ENCODE measurements at regions of chr6 and their contacts with region 1.

Region 1: DNA sequence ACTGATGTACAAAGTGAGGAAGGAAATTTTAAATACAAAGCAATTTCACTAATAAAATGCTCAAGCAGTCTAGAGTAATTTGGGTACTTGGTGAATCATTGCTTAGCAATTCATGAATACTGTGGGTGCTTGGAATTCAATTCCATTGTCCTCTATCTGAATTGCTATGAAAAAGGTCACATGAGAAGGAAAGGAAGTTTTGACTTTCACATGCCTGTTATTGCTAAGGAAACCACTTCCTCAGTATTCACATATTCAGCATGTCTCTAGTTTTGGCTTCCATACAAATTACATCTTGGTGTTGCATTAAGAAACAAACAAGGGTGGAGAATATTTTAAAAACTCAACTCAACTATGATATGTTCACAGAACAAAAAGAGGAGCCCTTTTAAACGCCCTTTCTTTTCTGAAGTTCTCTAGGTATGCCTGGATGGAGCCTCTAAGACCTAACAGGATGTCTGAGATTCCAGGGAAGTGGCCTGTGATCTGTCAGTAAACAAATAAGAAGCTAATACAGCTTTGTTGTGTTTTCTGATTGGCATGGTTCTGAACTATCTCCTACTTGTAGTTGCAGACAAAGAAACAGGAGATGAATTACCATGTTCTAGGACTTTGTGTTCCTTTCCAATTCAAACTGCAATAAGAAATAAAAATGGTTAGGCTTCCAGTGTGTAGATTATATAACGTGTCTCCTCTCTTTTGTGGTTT is 190.4 kb downstream of the OGFRL1 start:
- DNase-seq: no peak
- ATAC-seq: peak; percentile 48 to 86 (median 78)
- H3K4me3 ChIP-seq: no peak overlapping the region
- H3K27ac ChIP-seq: peak overlapping the region in 9 of 10 donors; percentile 10 to 81 (median 70)
- H3K4me1 ChIP-seq: peaks cover 0 to 62% (median 45%) of the 10 kb centered on the region in 9 donors
- H3K27me3 ChIP-seq: no peaks in the 10 kb centered on the region
- CTCF ChIP-seq: no peak

Region 2: DNA sequence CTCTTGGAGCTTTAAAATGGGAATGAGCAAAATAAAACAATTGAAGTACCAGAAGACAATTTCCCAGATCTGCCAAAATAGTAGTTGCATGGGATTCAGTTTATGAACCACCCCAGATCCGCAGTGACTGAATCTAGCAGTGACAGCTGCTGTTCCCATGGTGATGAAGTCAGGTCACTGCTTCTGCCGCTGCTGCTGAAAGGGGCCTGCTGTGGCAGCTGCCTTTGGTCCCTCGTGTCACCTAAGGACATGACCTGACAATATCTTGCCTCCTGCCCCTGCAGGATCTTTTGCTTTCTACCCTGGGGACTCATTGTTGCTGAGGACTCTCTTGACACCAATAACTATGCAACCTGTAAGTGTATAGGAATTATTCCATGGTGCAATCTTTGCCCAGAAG is 224.7 kb before region 1 on chr6:
- intact Hi-C with region 1: no loop called
- DNase-seq: peak in 1 of 2 donors; percentile 40
- ATAC-seq: peak in 7 of 8 donors; percentile 22 to 67 (median 54)
- H3K4me3 ChIP-seq: no peak overlapping the region
- H3K27ac ChIP-seq: peak overlapping the region in 4 of 10 donors; percentile 10 to 39 (median 28)
- H3K4me1 ChIP-seq: peaks cover 0 to 56% (median 37%) of the 10 kb centered on the region in 9 donors
- H3K27me3 ChIP-seq: no peaks in the 10 kb centered on the region
- CTCF ChIP-seq: no peak

Region 3: GRCh38 chr6:71324194-71324785 is 154.7 kb before region 1 on chr6:
- intact Hi-C with region 1: no loop called
- DNase-seq: peak in 1 of 2 donors; percentile 10
- ATAC-seq: peak in 6 of 8 donors; percentile 35 to 75 (median 45)
- H3K4me3 ChIP-seq: no peak overlapping the region
- H3K27ac ChIP-seq: peak overlapping the region in 4 of 10 donors; percentile 3 to 49 (median 14)
- H3K4me1 ChIP-seq: peaks cover 0 to 8% (median 0%) of the 10 kb centered on the region in 9 donors
- H3K27me3 ChIP-seq: no peaks in the 10 kb centered on the region
- CTCF ChIP-seq: no peak

Region 4: GRCh38 chr6:71393981-71394432 is 85.0 kb before region 1 on chr6:
- intact Hi-C with region 1: loop called in 1 of 10 experiments (anchors 5 kb)
- DNase-seq: no peak
- ATAC-seq: peak in 7 of 8 donors; percentile 24 to 65 (median 50)
- H3K4me3 ChIP-seq: no peak overlapping the region
- H3K27ac ChIP-seq: peak overlapping the region in 9 of 10 donors; percentile 31 to 80 (median 57)
- H3K4me1 ChIP-seq: peaks cover 15 to 81% (median 61%) of the 10 kb centered on the region in 9 donors
- H3K27me3 ChIP-seq: no peaks in the 10 kb centered on the region
- CTCF ChIP-seq: no peak

Region 5: GRCh38 chr6:71420693-71421328 is 58.2 kb before region 1 on chr6:
- intact Hi-C with region 1: loop called in 1 of 10 experiments (anchors 2 kb)
- DNase-seq: peak; percentile 95 to 98
- ATAC-seq: peak; percentile 98 to 99 (median 99)
- H3K4me3 ChIP-seq: peak overlapping the region; percentile 60 to 93 (median 89)
- H3K27ac ChIP-seq: peak overlapping the region; percentile 90 to 98 (median 96)
- H3K4me1 ChIP-seq: peaks cover 0 to 39% (median 22%) of the 10 kb centered on the region in 9 donors
- H3K27me3 ChIP-seq: peaks cover 0 to 46% (median 0%) of the 10 kb centered on the region in 7 donors
- CTCF ChIP-seq: peak in 2 of 9 donors; percentile 18 to 20